BJ (cell line): ENCODE measurements at regions of chr5 and their contacts with region 1.

Region 1: GRCh38 chr5:154072414-154073171 is 33.8 kb downstream of the MFAP3 start:
- DNase-seq: no peak
- H3K4me3 ChIP-seq: no peak overlapping the region
- H3K27me3 ChIP-seq: no peaks in the 10 kb centered on the region
- CTCF ChIP-seq: peak; percentile 88

Region 2: DNA sequence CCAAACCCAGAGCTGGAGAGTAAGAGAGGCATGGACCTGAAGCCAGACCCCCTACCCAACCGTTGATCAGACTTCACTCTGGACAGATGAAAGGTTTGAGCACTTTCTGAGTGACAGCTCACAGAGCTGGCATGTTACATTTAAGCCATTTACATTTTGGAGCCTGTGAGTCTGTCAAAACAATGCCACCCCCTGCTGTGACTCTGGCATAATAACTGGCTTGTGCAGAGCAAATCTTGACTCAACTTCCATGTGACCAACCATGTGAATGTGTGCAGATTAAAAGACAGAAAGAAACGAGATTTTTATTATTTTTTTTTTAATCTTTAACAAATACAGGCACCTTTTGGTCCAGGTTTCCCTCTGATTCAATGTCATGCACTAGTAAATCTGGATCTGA is 14.7 kb after region 1 on chr5:
- CTCF ChIA-PET with region 1: interaction called, 10 read pairs
- POLR2A ChIA-PET with region 1: no interaction called
- DNase-seq: no peak
- H3K4me3 ChIP-seq: no peak overlapping the region
- H3K27me3 ChIP-seq: no peaks in the 10 kb centered on the region
- CTCF ChIP-seq: no peak

Region 3: GRCh38 chr5:154174091-154174490 is 101.5 kb after region 1 on chr5:
- CTCF ChIA-PET with region 1: interaction called, 48 read pairs
- POLR2A ChIA-PET with region 1: interaction called, 6 read pairs
- DNase-seq: no peak
- H3K4me3 ChIP-seq: no peak overlapping the region
- H3K27me3 ChIP-seq: peaks cover 3% of the 10 kb centered on the region
- CTCF ChIP-seq: no peak

Region 4: DNA sequence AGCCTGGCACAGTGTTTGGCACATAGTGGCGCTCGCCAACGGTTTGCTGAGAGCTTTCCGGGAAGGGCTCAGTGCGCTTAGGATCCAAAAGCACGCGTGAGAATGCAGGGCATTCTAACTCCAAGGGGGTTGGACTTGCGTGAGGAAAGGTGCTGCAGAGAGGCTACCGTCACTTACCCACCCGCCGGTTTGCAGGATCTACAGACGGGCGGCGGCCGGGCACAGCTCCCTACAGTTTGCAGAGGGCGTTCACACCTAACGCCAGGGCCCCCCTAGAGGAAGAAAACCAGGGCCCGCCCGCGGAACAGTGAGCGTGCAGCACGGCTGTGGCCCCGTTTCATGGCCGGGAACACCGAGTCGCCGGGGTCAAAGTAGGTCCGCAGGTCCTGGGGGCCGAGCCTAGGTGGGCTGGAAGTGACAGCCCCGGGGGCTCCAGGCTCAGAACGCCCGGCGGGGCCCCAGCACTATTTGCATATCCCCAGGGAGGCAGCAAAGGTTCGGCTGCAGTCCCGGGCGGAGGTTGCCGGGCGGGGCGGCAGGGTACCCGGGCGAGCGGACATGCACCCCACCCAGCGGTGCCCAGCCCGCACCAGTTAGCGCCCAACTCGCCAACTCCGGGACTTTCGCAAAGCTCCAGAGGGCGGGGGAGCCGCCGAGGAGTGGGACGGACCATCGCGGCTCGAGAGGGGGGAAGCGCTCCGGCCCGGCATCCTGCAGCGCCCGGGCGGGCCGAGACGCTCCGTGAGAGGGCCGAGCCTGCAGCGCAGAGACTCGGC is 117.4 kb after region 1 on chr5:
- CTCF ChIA-PET with region 1: interaction called, 17 read pairs
- POLR2A ChIA-PET with region 1: no interaction called
- DNase-seq: no peak
- H3K4me3 ChIP-seq: peak overlapping the region; percentile 81
- H3K27me3 ChIP-seq: no peaks in the 10 kb centered on the region
- CTCF ChIP-seq: peak; percentile 57

Region 5: GRCh38 chr5:154421868-154422267 is 349.3 kb after region 1 on chr5:
- CTCF ChIA-PET with region 1: interaction called, 10 read pairs
- POLR2A ChIA-PET with region 1: no interaction called
- DNase-seq: no peak
- H3K4me3 ChIP-seq: no peak overlapping the region
- H3K27me3 ChIP-seq: no peaks in the 10 kb centered on the region
- CTCF ChIP-seq: peak; percentile 44; the same call in 1 of the 2 replicates

Region 6: GRCh38 chr5:154467655-154468354 is 395.2 kb after region 1 on chr5:
- CTCF ChIA-PET with region 1: interaction called, 19 read pairs
- POLR2A ChIA-PET with region 1: no interaction called
- DNase-seq: no peak
- H3K4me3 ChIP-seq: no peak overlapping the region
- H3K27me3 ChIP-seq: peaks cover 21% of the 10 kb centered on the region
- CTCF ChIP-seq: peak; percentile 94